A673 (cell line): ENCODE measurements at regions of chr2 and their contacts with region 1.

Region 1: GRCh38 chr2:209960676-209961630 is 41.5 kb upstream of the RPE start:
- DNase-seq: peak; percentile 91
- H3K4me3 ChIP-seq: no peak overlapping the region
- H3K27ac ChIP-seq: peak overlapping the region; percentile 55
- H3K4me1 ChIP-seq: peaks cover 48% of the 10 kb centered on the region
- H3K27me3 ChIP-seq: no peaks in the 10 kb centered on the region
- CTCF ChIP-seq: peak; percentile 80

Region 2: GRCh38 chr2:209577376-209578357 is 383.3 kb before region 1 on chr2:
- CTCF ChIA-PET with region 1: interaction called, 4 read pairs
- POLR2A ChIA-PET with region 1: no interaction called
- intact Hi-C with region 1: loop called (anchors 5 kb)
- DNase-seq: peak; percentile 34
- H3K4me3 ChIP-seq: no peak overlapping the region
- H3K27ac ChIP-seq: no peak overlapping the region
- H3K4me1 ChIP-seq: no peaks in the 10 kb centered on the region
- H3K27me3 ChIP-seq: no peaks in the 10 kb centered on the region
- CTCF ChIP-seq: peak; percentile 67

Region 3: DNA sequence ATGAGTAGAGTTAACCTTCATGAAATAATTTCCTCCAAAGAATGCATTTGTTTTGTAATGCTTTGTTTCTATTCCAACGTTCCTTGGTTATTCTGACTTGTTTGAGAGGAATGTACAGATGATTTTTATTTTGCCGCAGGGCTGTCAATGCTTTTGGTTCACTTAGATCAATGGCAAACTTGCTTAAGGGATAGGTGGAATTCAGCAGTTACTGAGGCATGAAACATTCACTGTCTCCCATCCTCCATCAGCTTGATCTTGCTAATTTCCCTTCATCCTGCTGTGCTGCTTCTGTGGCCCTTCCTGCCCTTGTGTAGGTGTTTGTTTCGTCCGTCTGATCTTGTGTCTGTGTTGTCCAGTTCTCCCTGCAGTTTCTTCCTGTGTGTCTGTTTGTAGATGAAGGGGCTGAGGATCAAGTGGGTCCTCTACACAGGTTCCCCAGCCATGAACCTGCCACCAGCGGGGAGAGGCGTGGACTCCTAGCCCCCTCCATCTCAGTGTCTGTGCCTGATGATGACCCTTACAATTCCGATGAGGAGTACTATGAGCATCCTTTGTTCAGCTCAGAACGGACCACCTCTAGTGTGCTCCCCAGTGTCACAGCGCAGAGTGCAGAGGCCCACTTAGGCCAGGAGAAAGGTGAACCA is 273.5 kb before region 1 on chr2:
- CTCF ChIA-PET with region 1: no interaction called
- POLR2A ChIA-PET with region 1: no interaction called
- intact Hi-C with region 1: no loop called
- DNase-seq: no peak
- H3K4me3 ChIP-seq: no peak overlapping the region
- H3K27ac ChIP-seq: no peak overlapping the region
- H3K4me1 ChIP-seq: no peaks in the 10 kb centered on the region
- H3K27me3 ChIP-seq: peaks cover 17% of the 10 kb centered on the region
- CTCF ChIP-seq: no peak

Region 4: GRCh38 chr2:209790066-209790728 is 170.8 kb before region 1 on chr2:
- CTCF ChIA-PET with region 1: interaction called, 8 read pairs
- POLR2A ChIA-PET with region 1: no interaction called
- intact Hi-C with region 1: loop called (anchors 5 kb)
- DNase-seq: no peak
- H3K4me3 ChIP-seq: no peak overlapping the region
- H3K27ac ChIP-seq: no peak overlapping the region
- H3K4me1 ChIP-seq: no peaks in the 10 kb centered on the region
- H3K27me3 ChIP-seq: no peaks in the 10 kb centered on the region
- CTCF ChIP-seq: no peak

Region 5: DNA sequence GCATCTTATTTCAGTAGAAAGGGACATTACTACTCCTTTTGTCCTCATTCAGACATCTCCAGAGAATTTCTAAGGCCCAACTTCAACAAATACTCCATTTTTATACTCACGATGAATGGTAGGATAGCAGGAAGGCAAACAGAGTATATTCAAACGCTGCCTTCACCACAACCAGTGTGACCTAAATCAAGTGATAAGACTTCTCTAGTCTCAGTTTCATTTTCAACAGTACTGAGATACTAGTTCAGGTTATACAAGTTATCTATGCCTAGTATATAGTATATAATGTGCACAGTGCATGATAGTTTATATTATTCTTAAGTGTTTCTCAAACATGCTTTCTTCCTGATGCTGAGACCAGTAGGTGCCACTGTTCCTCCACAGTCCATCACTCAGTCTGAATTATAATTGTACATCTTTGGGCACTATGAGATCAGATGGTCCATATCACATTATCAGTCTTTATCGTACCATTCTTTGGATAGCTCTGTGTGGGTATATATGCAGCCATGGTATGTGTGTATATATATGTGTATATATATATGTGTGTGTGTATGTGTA is 24.8 kb before region 1 on chr2:
- CTCF ChIA-PET with region 1: interaction called, 7 read pairs
- POLR2A ChIA-PET with region 1: no interaction called
- intact Hi-C with region 1: loop called (anchors 2 kb)
- DNase-seq: peak; percentile 40
- H3K4me3 ChIP-seq: no peak overlapping the region
- H3K27ac ChIP-seq: no peak overlapping the region
- H3K4me1 ChIP-seq: peaks cover 15% of the 10 kb centered on the region
- H3K27me3 ChIP-seq: no peaks in the 10 kb centered on the region
- CTCF ChIP-seq: peak; percentile 57